ENCODE measurements at regions of chr2 and their contacts with region 1.

Region 1: GRCh38 chr2:19312949-19313348 is 45.5 kb downstream of the OSR1 start:
- DNase-seq: peak; percentile 4
- ATAC-seq: peak; percentile 90
- H3K4me3 ChIP-seq: no peak overlapping the region
- H3K27ac ChIP-seq: no peak overlapping the region
- H3K4me1 ChIP-seq: no peaks in the 10 kb centered on the region
- H3K27me3 ChIP-seq: no peaks in the 10 kb centered on the region
- CTCF ChIP-seq: peak; percentile 29 to 44 (median 44); a peak in 5 of 6 replicates
- POLR2A ChIP-seq: no peak
- RAD21 ChIP-seq: peak; percentile 48

Region 2: DNA sequence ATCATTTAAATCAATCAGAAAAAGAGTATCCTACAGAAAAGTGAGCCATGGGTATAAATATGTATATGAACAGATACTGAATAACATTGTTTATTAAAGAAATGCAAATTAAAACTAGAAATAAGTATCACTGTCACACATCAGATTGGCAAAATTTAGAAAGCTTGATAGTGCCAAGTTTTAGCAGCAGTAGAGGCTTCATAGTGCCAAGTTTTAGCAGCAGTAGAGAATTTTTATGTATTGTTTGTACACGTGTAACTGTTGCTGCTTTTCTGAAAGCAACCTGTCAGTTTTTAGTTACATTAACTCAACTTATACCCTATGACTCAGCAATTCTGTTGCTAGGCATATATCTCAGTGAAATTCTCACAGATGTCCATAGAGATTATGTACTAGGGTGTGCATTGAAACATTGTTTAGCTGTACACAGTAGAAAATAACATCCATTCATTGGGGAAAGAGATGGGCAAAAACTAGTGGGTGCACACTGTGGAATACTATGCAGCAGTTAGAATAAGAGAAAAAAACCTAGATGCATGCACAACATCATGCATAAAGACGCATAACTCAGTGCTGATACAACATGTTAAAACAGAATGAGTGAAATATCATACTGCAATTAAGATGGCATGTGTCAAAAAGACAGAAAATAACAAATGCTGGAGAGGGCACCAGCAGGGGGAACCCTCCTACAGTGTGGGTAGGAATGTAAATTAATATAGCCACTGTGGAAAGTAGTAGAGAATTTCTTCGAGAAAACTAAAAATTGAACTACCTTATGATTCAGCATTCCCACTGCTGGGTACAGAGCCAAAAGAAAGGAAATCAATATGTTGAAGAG is 429.1 kb before region 1 on chr2:
- CTCF ChIA-PET with region 1: no interaction called
- POLR2A ChIA-PET with region 1: no interaction called
- RAD21 ChIA-PET with region 1: no interaction called
- intact Hi-C with region 1: loop called (anchors 10 kb)
- DNase-seq: peak; percentile 7
- ATAC-seq: peak; percentile 54
- H3K4me3 ChIP-seq: no peak overlapping the region
- H3K27ac ChIP-seq: no peak overlapping the region
- H3K4me1 ChIP-seq: no peaks in the 10 kb centered on the region
- H3K27me3 ChIP-seq: no peaks in the 10 kb centered on the region
- CTCF ChIP-seq: peak; percentile 50 to 66 (median 56); a peak in 5 of 6 replicates
- POLR2A ChIP-seq: no peak
- RAD21 ChIP-seq: peak; percentile 75

Region 3: DNA sequence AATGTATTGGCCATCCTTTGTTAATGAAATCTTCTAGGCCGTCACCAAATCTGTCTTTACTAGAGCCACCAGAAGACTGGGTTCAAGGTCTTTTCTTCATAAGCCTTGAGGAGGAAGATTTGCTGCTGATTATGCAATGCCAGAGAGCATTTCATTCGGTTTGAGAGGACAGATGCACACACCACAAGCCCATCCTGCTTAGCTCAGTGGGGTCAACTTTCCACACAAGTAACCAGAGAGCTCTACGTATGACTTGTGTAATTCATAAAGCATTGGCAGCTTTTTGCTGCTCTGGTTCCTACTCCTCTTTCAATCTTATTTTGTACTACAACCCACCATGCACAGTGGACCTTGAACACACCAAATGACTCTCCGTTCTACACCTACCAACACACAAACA is 61.4 kb before region 1 on chr2:
- CTCF ChIA-PET with region 1: no interaction called
- POLR2A ChIA-PET with region 1: no interaction called
- RAD21 ChIA-PET with region 1: no interaction called
- intact Hi-C with region 1: no loop called
- DNase-seq: no peak
- ATAC-seq: no peak
- H3K4me3 ChIP-seq: no peak overlapping the region
- H3K27ac ChIP-seq: no peak overlapping the region
- H3K4me1 ChIP-seq: peaks cover 3 to 12% of the 10 kb centered on the region in 2 experiments; a peak in 2 of 4 replicates
- H3K27me3 ChIP-seq: no peaks in the 10 kb centered on the region
- CTCF ChIP-seq: no peak
- POLR2A ChIP-seq: no peak
- RAD21 ChIP-seq: no peak

Region 4: DNA sequence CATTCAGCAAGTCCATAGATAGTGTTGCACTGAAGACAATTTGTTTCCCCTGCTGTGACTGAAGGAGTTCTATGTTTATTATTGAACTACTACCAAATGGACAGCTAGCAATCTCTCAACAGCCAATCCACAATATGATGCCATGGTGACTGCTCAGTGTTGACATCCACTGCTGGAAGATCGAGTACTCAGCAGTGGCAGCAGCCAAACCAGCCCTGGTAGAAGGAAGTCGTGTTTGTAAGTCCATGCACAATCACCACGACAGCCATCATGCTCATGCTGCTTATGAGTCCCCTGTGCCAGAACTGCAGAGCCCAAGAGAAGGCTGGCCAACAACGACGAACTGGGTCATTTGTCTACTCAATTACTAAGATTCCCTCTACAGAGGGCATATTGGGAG is 20.9 kb before region 1 on chr2:
- CTCF ChIA-PET with region 1: no interaction called
- POLR2A ChIA-PET with region 1: no interaction called
- RAD21 ChIA-PET with region 1: no interaction called
- intact Hi-C with region 1: no loop called
- DNase-seq: no peak
- ATAC-seq: no peak
- H3K4me3 ChIP-seq: no peak overlapping the region
- H3K27ac ChIP-seq: no peak overlapping the region
- H3K4me1 ChIP-seq: no peaks in the 10 kb centered on the region
- H3K27me3 ChIP-seq: no peaks in the 10 kb centered on the region
- CTCF ChIP-seq: no peak
- POLR2A ChIP-seq: no peak
- RAD21 ChIP-seq: no peak

Region 5: DNA sequence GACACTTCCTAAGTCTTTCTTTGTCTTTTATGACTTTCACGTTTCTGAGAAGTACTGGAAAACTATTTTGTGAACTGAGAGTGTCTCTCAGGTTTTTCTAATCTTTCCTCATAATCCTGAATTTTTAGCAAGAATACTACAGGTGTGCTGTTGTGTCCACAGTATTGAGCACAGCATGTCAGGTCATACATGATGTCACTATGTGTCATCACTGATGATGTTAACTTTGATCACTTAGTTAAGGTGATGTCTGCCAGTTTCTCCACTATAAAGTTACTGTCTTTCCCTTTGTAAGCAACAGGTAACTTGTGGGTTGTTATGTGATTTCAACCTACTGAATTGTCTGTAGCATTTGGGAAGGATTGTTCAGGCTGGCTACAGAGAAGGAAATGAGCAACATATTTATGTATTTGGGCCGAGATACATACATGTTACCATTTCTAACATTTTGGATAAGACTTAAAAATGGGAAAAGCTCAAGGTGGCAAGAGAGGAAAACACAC is 688.5 kb after region 1 on chr2:
- CTCF ChIA-PET with region 1: no interaction called
- POLR2A ChIA-PET with region 1: no interaction called
- RAD21 ChIA-PET with region 1: no interaction called
- intact Hi-C with region 1: no loop called
- DNase-seq: no peak
- ATAC-seq: no peak
- H3K4me3 ChIP-seq: no peak overlapping the region
- H3K27ac ChIP-seq: no peak overlapping the region
- H3K4me1 ChIP-seq: no peaks in the 10 kb centered on the region
- H3K27me3 ChIP-seq: no peaks in the 10 kb centered on the region
- CTCF ChIP-seq: no peak
- POLR2A ChIP-seq: no peak
- RAD21 ChIP-seq: no peak

Measured in HCT116 (cell line).